ENCODE measurements at regions of chr6 and their contacts with region 1.

Region 1: GRCh38 chr6:131909408-131910218 is 41.6 kb downstream of the CCN2 start:
- DNase-seq: peak; percentile 66
- H3K4me3 Mint-ChIP-seq: no peak overlapping the region
- H3K27ac Mint-ChIP-seq: peak overlapping the region; percentile 67
- H3K4me1 Mint-ChIP-seq: peaks cover 30% of the 10 kb centered on the region
- H3K27me3 Mint-ChIP-seq: peaks cover 29% of the 10 kb centered on the region

Region 2: GRCh38 chr6:131063028-131063763 is 846.4 kb before region 1 on chr6 and contains the start of gene EPB41L2:
- intact Hi-C with region 1: loop called (anchors 5 kb)
- DNase-seq: peak; percentile 68
- H3K4me3 Mint-ChIP-seq: peak within 1 kb of the TSS; percentile 78
- H3K27ac Mint-ChIP-seq: no peak within 1 kb of the TSS
- H3K4me1 Mint-ChIP-seq: peaks cover 26% of the 10 kb centered on the region
- H3K27me3 Mint-ChIP-seq: peaks cover 32% of the 10 kb centered on the region
- total RNA-seq, gene EPB41L2: 20.8 and 26.9 TPM in 2 replicates

Region 3: GRCh38 chr6:131807644-131808459 is 101.8 kb before region 1 on chr6 and contains the start of gene ENPP1:
- intact Hi-C with region 1: loop called (anchors 5 kb)
- DNase-seq: peak; percentile 52
- H3K4me3 Mint-ChIP-seq: peak within 1 kb of the TSS; percentile 90
- H3K27ac Mint-ChIP-seq: peak within 1 kb of the TSS; percentile 85
- H3K4me1 Mint-ChIP-seq: peaks cover 37% of the 10 kb centered on the region
- H3K27me3 Mint-ChIP-seq: peaks cover 40% of the 10 kb centered on the region
- total RNA-seq, gene ENPP1: 34.8 TPM in 2 replicates

Region 4: DNA sequence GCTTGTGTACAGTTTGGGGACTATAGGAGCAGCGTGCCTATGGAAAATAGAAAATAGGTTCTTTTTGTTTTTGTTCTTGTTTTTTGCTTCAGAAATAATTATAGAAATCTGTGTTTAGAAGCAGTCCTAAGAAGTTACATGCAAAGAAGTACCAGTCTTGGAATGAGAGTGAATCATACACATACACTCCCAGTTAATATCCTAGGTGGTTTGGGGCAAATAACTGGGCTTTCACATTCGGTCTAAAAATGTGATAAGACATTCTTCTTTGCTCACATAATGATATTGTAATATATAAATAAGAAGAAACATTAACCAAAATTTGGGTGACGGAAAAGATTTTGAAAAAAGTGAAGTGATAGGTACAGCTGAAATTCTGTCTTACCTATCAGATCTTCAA is 40.8 kb before region 1 on chr6:
- intact Hi-C with region 1: no loop called
- DNase-seq: no peak
- H3K4me3 Mint-ChIP-seq: no peak overlapping the region
- H3K27ac Mint-ChIP-seq: no peak overlapping the region
- H3K4me1 Mint-ChIP-seq: peaks cover 3% of the 10 kb centered on the region
- H3K27me3 Mint-ChIP-seq: peaks cover 1% of the 10 kb centered on the region

Region 5: GRCh38 chr6:131894735-131895424 is 14.7 kb before region 1 on chr6:
- intact Hi-C with region 1: loop called (anchors 1 kb)
- DNase-seq: peak; percentile 16
- H3K4me3 Mint-ChIP-seq: no peak overlapping the region
- H3K27ac Mint-ChIP-seq: peak overlapping the region; percentile 38
- H3K4me1 Mint-ChIP-seq: peaks cover 20% of the 10 kb centered on the region
- H3K27me3 Mint-ChIP-seq: peaks cover 4% of the 10 kb centered on the region

Region 6: GRCh38 chr6:131960371-131961133 is 50.9 kb after region 1 on chr6:
- intact Hi-C with region 1: no loop called
- DNase-seq: no peak
- H3K4me3 Mint-ChIP-seq: no peak overlapping the region
- H3K27ac Mint-ChIP-seq: no peak overlapping the region
- H3K4me1 Mint-ChIP-seq: no peaks in the 10 kb centered on the region
- H3K27me3 Mint-ChIP-seq: peaks cover 5% of the 10 kb centered on the region

Region 7: GRCh38 chr6:132483779-132484679 is 574.4 kb after region 1 on chr6:
- intact Hi-C with region 1: loop called (anchors 10 kb)
- DNase-seq: peak; percentile 15
- H3K4me3 Mint-ChIP-seq: no peak overlapping the region
- H3K27ac Mint-ChIP-seq: no peak overlapping the region
- H3K4me1 Mint-ChIP-seq: peaks cover 16% of the 10 kb centered on the region
- H3K27me3 Mint-ChIP-seq: peaks cover 4% of the 10 kb centered on the region